ENCODE measurements at regions of chr6 and their contacts with region 1.

Region 1: DNA sequence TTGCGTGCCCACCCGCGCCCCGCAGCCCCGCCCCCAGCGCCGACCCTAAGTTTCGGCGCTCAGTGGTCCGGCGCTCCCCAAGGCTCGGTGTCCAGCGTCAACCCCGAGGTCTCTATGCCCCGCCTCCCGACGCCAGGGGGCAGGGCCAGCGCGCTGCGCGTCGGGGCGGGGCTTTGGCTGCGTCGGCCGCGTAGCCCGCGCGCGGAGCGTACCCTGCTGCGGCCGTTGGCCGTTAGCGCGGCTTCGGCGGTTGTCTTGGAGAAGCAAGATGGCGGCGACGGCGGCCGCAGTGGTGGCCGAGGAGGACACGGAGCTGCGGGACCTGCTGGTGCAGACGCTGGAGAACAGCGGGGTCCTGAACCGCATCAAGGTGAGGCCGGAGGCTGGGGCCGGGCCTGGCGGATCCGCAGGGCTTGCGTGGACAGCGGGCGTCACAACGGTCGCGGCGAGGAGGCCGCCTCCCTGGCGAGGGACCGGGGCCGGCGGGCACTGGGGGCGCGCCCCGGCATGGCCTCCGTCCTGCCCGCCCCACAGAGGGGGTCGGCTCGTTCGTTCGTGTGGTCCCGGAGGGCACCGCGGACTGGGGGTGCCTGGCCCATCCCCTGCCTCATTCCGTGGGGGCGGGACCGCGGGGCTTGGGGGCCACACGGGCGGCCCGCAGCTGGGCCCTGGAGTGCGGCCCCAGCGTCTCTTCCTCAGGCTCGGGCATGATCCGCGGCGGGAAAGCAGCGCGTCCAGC is at the start of gene CEP43:
- DNase-seq: peak; percentile 87
- H3K4me3 Mint-ChIP-seq: peak within 1 kb of the TSS; percentile 87
- H3K27ac Mint-ChIP-seq: peak within 1 kb of the TSS; percentile 80
- H3K4me1 Mint-ChIP-seq: peaks cover 35% of the 10 kb centered on the region
- H3K27me3 Mint-ChIP-seq: no peaks in the 10 kb centered on the region
- total RNA-seq, gene CEP43: 15.9 and 18.1 TPM in 2 replicates

Region 2: GRCh38 chr6:166830185-166830890 is 169.0 kb before region 1 on chr6:
- intact Hi-C with region 1: loop called (anchors 5 kb)
- DNase-seq: no peak
- H3K4me3 Mint-ChIP-seq: no peak overlapping the region
- H3K27ac Mint-ChIP-seq: peak overlapping the region; percentile 76
- H3K4me1 Mint-ChIP-seq: peaks cover 20% of the 10 kb centered on the region
- H3K27me3 Mint-ChIP-seq: peaks cover 4% of the 10 kb centered on the region

Region 3: DNA sequence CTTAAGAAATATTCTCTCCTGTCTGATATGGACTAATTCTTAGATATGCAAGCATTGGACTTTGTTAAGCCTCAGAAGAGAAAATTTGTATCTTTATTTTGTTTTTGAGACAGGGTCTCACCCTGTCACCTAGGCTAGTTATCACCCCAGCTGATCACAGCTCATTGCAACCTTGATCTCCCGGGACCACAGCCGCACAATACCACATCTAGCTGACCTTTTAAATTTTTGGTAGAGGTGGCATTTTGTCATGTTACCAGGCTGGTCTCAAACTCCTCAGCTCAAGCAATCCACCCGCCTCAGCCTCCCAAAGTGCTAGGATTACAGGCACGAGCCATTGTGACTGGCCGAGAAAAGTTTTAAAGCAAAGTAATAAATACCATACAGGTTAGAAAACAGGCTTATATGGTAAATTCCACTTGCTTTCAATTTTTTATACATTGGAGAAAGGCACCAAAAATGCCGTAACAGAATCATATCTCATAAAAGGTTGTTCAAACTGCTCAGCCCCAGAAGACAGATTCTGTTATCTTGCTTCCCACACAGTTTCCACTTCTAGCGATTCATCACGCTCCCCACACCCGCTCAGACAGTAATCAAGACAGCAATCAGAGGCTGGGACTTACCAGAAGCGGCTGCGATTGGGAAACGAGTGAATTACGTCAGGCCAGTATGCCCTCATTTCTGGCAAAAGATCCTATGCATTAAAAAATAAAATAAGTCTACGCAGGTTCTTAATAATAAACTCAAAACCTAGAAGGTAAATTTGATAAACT is 56.7 kb before region 1 on chr6:
- intact Hi-C with region 1: loop called (anchors 1 kb)
- DNase-seq: peak; percentile 61
- H3K4me3 Mint-ChIP-seq: peak overlapping the region; percentile 56
- H3K27ac Mint-ChIP-seq: peak overlapping the region; percentile 94
- H3K4me1 Mint-ChIP-seq: peaks cover 29% of the 10 kb centered on the region
- H3K27me3 Mint-ChIP-seq: no peaks in the 10 kb centered on the region

Region 4: DNA sequence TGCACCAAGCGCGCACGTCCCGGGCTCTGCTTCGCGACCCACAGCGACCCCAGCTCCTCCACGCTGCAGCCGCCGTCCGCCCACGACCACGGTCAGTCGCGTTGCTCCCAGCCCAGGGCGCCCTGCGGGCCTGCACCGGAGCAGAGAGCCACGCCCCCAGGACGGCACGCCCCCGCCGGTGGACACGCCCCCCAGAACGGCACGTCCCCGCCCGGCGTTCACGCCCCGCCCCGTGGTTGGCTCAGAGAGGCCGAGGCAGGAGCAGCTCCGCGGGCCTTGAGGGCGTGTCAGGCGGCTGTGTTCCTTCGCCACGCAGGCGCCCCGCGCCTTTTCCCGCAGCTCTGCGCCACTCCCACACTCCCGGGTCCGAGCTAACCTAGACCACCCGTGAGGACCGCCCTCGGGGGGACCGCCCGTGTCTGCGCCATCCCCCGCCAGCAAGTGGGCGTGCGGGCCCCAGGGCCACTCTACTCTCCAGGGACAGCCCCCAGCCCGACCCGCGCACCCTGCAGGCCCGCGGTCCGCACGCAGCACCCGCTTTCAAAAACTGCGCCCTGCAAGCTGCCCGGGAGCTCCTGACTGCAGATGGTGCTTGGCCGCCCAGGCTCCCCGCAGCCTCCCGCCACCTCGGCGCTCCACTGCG is 42.7 kb before region 1 on chr6 and contains the start of gene RNASET2:
- intact Hi-C with region 1: loop called (anchors 1 kb)
- DNase-seq: peak; percentile 97
- H3K4me3 Mint-ChIP-seq: peak within 1 kb of the TSS; percentile 96
- H3K27ac Mint-ChIP-seq: peak within 1 kb of the TSS; percentile 99
- H3K4me1 Mint-ChIP-seq: peaks cover 69% of the 10 kb centered on the region
- H3K27me3 Mint-ChIP-seq: no peaks in the 10 kb centered on the region
- total RNA-seq, gene RNASET2: 53.4 and 56.2 TPM in 2 replicates

Region 5: DNA sequence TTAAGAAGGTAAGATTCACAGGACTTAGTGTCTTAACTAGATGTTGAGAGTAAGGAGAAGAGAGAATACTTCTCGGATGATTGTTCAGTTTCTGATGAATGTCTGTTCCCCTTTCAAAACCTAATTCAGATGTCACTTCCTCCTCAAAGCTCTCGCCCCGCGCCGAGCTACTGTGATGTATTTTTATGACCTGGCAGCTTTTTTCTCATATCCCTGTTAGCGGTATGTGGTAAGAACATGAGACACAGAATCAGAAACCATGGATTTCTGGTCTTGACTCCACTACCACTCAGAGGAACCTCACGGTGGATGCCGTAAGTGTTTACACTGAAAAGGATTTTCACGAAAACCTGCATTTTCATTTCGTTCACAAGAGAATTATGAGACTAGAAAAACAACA is 48.2 kb after region 1 on chr6:
- intact Hi-C with region 1: loop called (anchors 2 kb)
- DNase-seq: no peak
- H3K4me3 Mint-ChIP-seq: peak overlapping the region; percentile 9
- H3K27ac Mint-ChIP-seq: peak overlapping the region; percentile 50
- H3K4me1 Mint-ChIP-seq: peaks cover 27% of the 10 kb centered on the region
- H3K27me3 Mint-ChIP-seq: no peaks in the 10 kb centered on the region

Region 6: GRCh38 chr6:167073679-167074274 is 74.5 kb after region 1 on chr6:
- intact Hi-C with region 1: no loop called
- DNase-seq: no peak
- H3K4me3 Mint-ChIP-seq: no peak overlapping the region
- H3K27ac Mint-ChIP-seq: no peak overlapping the region
- H3K4me1 Mint-ChIP-seq: peaks cover 7% of the 10 kb centered on the region
- H3K27me3 Mint-ChIP-seq: peaks cover 63% of the 10 kb centered on the region

Region 7: GRCh38 chr6:167141667-167142432 is 142.5 kb after region 1 on chr6:
- intact Hi-C with region 1: loop called (anchors 5 kb)
- DNase-seq: peak; percentile 12
- H3K4me3 Mint-ChIP-seq: no peak overlapping the region
- H3K27ac Mint-ChIP-seq: no peak overlapping the region
- H3K4me1 Mint-ChIP-seq: no peaks in the 10 kb centered on the region
- H3K27me3 Mint-ChIP-seq: peaks cover 28% of the 10 kb centered on the region

Region 8: GRCh38 chr6:167350731-167351655 is 351.7 kb after region 1 on chr6:
- intact Hi-C with region 1: loop called (anchors 5 kb)
- DNase-seq: peak; percentile 79
- H3K4me3 Mint-ChIP-seq: peak overlapping the region; percentile 79
- H3K27ac Mint-ChIP-seq: peak overlapping the region; percentile 84
- H3K4me1 Mint-ChIP-seq: peaks cover 15% of the 10 kb centered on the region
- H3K27me3 Mint-ChIP-seq: peaks cover 32% of the 10 kb centered on the region